ENCODE measurements at regions of chr21 and their contacts with region 1.

Region 1: DNA sequence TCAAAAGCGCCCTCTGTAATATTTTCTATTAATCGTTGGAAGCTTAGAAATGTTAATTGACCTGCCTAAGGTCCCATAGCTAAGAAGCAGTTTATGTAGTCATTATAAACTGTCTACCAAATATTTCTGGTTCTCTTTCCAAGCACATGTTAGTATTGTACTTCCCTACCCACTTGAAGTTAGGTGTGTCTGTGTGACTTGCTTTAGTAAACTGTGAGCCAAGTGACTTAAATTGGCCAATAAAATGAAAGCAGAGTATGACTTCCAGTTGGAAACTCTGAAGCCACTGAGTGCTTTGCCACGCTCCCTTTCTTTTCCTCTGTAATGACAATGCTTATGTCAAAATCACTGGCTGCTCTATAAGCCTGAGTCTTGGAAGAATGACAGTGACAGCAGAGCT is 20.6 kb upstream of the ADAMTS1 start:
- DNase-seq: no peak
- ATAC-seq: no peak
- H3K4me3 ChIP-seq: no peak overlapping the region
- H3K4me3 Mint-ChIP-seq: no peak overlapping the region
- H3K27ac ChIP-seq: no peak overlapping the region
- H3K27ac Mint-ChIP-seq: no peak overlapping the region
- H3K4me1 ChIP-seq: no peaks in the 10 kb centered on the region
- H3K4me1 Mint-ChIP-seq: no peaks in the 10 kb centered on the region
- H3K27me3 ChIP-seq: no peaks in the 10 kb centered on the region
- H3K27me3 Mint-ChIP-seq: peaks cover 14% of the 10 kb centered on the region
- CTCF ChIP-seq: no peak

Region 2: DNA sequence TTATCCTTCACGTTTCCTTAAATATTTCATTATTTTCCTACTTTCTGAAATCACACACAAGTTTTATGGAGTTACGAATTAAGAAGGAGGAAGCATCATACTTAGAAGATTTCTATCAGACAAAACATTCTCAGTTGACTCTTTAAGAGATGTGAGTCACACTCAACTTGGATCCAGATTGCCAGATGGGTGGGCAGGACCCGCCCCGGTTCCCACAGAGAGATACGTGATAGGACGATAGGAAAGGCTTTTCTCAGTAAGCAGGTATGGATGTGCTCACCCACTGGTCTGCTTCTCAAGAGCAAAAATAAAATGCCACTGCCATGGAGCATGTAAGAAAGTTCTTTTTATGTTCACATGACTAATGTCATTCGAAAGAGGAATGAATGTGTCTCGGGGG is 1651.2 kb before region 1 on chr21:
- CTCF ChIA-PET with region 1: no interaction called
- POLR2A ChIA-PET with region 1: no interaction called
- intact Hi-C with region 1: loop called in 1 of 2 experiments (anchors 5 kb)
- DNase-seq: no peak
- ATAC-seq: no peak
- H3K4me3 ChIP-seq: no peak overlapping the region
- H3K4me3 Mint-ChIP-seq: no peak overlapping the region
- H3K27ac ChIP-seq: no peak overlapping the region
- H3K27ac Mint-ChIP-seq: no peak overlapping the region
- H3K4me1 ChIP-seq: no peaks in the 10 kb centered on the region
- H3K4me1 Mint-ChIP-seq: no peaks in the 10 kb centered on the region
- H3K27me3 ChIP-seq: no peaks in the 10 kb centered on the region
- H3K27me3 Mint-ChIP-seq: no peaks in the 10 kb centered on the region
- CTCF ChIP-seq: no peak

Region 3: DNA sequence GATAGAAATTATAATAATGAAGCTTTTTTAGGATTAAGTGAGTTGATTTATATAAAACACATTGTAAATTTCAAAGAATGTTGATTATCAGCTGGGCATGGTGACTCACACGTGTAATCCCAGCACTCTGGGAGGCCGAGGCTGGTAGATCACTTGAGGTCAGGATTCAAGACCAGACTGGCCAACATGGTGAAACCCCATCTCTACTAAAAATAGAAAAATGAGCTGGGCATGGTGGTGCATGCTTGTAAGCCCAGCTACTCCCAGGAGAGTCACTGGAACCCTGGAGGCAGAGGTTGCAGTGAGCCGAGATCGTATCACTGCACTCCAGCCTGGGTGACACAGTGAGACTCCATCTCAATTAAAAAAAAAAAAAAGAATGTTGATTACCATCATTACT is 39.1 kb before region 1 on chr21:
- CTCF ChIA-PET with region 1: no interaction called
- POLR2A ChIA-PET with region 1: no interaction called
- intact Hi-C with region 1: loop called in 1 of 2 experiments (anchors 5 kb)
- DNase-seq: no peak
- ATAC-seq: no peak
- H3K4me3 ChIP-seq: no peak overlapping the region
- H3K4me3 Mint-ChIP-seq: no peak overlapping the region
- H3K27ac ChIP-seq: no peak overlapping the region
- H3K27ac Mint-ChIP-seq: no peak overlapping the region
- H3K4me1 ChIP-seq: no peaks in the 10 kb centered on the region
- H3K4me1 Mint-ChIP-seq: no peaks in the 10 kb centered on the region
- H3K27me3 ChIP-seq: no peaks in the 10 kb centered on the region
- H3K27me3 Mint-ChIP-seq: peaks cover 9% of the 10 kb centered on the region
- CTCF ChIP-seq: no peak

Region 4: DNA sequence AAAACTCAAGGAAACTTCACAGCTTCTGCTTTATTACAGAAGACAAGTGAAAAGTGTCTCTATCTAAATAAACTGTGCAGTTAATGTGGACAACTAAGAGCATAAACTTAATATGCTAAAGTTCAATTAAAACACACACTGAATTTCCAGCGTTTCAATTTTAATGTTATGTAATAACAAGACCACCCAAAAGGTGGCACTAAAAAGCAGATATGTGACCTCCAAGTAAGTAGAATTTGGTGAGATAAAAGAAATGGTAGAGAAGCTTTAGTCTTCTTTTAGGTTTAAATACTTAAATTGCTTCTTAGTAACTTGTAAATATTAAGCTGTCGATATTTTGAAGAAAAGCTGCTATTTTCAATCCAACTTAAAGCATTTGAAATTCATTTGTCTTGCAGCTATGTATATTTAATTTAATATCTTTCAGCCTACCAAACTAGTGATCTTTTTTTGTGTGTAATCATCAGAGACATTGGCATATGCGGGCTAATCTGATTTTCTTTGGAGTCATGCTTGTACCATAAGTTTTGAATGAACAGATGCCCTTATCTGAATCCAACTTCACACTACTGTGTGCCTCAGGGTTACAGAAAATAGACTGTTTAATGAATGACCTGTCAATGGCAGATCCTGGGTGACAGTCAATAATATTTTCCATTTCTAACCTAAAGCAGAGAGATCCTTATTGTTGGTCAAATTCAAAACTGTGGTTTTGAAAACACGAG is 15.8 kb after region 1 on chr21:
- CTCF ChIA-PET with region 1: no interaction called
- POLR2A ChIA-PET with region 1: no interaction called
- intact Hi-C with region 1: no loop called
- DNase-seq: no peak
- ATAC-seq: no peak
- H3K4me3 ChIP-seq: no peak overlapping the region
- H3K4me3 Mint-ChIP-seq: no peak overlapping the region
- H3K27ac ChIP-seq: no peak overlapping the region
- H3K27ac Mint-ChIP-seq: no peak overlapping the region
- H3K4me1 ChIP-seq: no peaks in the 10 kb centered on the region
- H3K4me1 Mint-ChIP-seq: no peaks in the 10 kb centered on the region
- H3K27me3 ChIP-seq: no peaks in the 10 kb centered on the region
- H3K27me3 Mint-ChIP-seq: peaks cover 8% of the 10 kb centered on the region
- CTCF ChIP-seq: no peak